Dorsolateral prefrontal cortex (tissue), 120 donors: ENCODE measurements at regions of chr12 and their contacts with region 1.

Region 1: DNA sequence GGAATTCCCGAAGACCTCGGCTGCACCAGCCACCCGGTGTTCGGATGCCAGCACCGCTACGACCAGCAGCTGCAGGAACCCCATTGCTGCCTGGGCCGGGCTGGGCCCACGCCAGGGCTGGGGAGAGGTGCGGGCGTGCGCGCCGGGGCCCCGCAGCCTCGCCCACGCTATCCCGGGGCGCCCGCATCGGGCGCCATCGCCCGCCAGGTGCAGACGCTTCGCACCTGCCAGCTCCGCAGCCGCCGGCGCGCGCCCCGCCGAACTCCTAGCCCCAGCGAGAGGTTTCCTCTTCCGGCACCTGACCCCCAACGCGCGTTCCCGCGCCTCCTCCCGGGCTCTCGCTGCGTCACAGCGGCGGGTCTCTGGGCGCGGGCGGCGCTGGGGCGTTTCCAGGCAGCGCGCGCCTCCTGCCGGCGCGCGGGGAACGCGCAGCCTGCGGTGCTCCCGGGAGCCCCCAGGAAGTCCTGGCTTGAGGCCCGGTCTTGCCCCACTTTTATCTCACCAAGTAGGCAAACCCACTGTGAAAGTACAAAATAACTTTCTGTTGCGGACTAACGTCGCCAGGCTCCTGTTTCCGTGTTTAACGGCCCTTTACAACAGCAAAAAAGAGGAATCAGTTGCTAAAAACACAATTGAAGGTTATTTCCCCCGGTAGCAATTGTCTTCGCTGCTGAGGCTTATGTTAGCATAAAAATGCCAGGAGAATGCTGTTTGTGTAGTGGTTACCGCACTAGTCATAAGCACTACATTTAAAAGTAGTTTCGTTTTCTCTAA is at the start of gene TM7SF3:
- DNase-seq: peak; percentile 76 to 94 (median 88)
- H3K4me3 ChIP-seq: peak within 1 kb of the TSS; percentile 51 to 97 (median 85)
- H3K27ac ChIP-seq: peak within 1 kb of the TSS; percentile 66 to 98 (median 90)
- H3K27me3 ChIP-seq: no peaks in the 10 kb centered on the region
- CTCF ChIP-seq: peak; percentile 78 to 100 (median 98)
- total RNA-seq, gene TM7SF3: 52.9 to 129 (median 76.3) TPM

Region 2: GRCh38 chr12:26566675-26567074 is 447.6 kb before region 1 on chr12:
- intact Hi-C with region 1: no loop called
- DNase-seq: no peak
- H3K4me3 ChIP-seq: no peak overlapping the region
- H3K27ac ChIP-seq: peak overlapping the region in 17 of 59 donors; percentile 1 to 51 (median 22)
- H3K27me3 ChIP-seq: no peaks in the 10 kb centered on the region
- CTCF ChIP-seq: no peak

Region 3: DNA sequence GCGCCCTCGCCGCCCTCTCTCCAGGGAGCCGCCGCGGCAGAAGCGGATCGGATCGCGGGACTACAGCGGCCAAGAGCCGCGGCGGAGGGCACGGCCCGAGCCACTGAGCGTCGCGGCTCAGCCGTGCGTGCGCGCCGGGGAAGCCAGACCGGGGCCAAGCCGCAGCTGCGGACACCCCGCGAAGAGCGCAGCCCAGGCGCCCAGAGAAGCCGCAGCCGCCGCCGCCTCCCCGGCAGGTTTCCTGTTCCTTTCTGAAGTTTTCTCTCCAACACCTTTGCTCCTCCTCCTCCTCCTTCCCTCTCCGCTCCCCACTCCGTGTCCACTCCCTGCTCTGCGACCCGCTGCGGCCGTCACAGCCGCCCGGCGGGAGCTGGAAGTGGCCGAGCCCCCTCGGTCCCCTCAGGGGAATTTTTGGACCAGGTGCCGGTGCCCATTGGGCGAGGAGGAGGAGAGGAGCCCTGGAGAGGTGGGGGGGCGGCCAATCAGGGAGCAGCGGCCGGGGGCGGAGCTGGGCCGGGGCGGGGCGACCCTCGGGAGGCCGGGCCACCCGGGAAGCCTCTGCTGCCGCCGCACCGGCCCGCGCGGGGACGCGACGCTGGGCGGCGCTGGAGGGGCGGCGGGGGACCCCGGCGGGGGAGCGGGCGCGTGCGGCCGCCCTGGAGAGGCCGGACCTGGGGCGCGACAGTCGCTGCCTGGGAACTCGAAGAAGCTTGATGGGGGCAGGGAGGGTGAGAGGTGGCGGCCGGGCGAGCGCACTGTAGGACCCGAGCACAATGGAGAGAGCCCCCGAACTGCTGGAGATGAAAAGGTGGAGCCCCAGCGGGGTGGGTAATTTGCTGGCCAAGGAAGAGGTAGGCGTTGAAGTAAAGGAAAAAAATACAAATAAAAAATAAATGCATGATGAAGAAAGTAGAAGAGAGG is 181.2 kb before region 1 on chr12 and contains the start of gene ITPR2:
- intact Hi-C with region 1: loop called in 1 of 2 experiments (anchors 5 kb)
- DNase-seq: peak; percentile 73 to 94 (median 86)
- H3K4me3 ChIP-seq: peak within 1 kb of the TSS; percentile 69 to 96 (median 86)
- H3K27ac ChIP-seq: peak within 1 kb of the TSS in 58 of 59 donors; percentile 42 to 99 (median 89)
- H3K27me3 ChIP-seq: no peaks in the 10 kb centered on the region
- CTCF ChIP-seq: peak in 31 of 56 donors; percentile 6 to 66 (median 32)
- total RNA-seq, gene ITPR2: 35.5 to 122 (median 61.5) TPM

Region 4: GRCh38 chr12:26884765-26885576 is 129.3 kb before region 1 on chr12:
- intact Hi-C with region 1: loop called in 1 of 2 experiments (anchors 10 kb)
- DNase-seq: peak; percentile 37 to 89 (median 82)
- H3K4me3 ChIP-seq: peak overlapping the region in 32 of 59 donors; percentile 1 to 49 (median 32)
- H3K27ac ChIP-seq: no peak overlapping the region
- H3K27me3 ChIP-seq: no peaks in the 10 kb centered on the region
- CTCF ChIP-seq: peak; percentile 78 to 99 (median 94)

Region 5: DNA sequence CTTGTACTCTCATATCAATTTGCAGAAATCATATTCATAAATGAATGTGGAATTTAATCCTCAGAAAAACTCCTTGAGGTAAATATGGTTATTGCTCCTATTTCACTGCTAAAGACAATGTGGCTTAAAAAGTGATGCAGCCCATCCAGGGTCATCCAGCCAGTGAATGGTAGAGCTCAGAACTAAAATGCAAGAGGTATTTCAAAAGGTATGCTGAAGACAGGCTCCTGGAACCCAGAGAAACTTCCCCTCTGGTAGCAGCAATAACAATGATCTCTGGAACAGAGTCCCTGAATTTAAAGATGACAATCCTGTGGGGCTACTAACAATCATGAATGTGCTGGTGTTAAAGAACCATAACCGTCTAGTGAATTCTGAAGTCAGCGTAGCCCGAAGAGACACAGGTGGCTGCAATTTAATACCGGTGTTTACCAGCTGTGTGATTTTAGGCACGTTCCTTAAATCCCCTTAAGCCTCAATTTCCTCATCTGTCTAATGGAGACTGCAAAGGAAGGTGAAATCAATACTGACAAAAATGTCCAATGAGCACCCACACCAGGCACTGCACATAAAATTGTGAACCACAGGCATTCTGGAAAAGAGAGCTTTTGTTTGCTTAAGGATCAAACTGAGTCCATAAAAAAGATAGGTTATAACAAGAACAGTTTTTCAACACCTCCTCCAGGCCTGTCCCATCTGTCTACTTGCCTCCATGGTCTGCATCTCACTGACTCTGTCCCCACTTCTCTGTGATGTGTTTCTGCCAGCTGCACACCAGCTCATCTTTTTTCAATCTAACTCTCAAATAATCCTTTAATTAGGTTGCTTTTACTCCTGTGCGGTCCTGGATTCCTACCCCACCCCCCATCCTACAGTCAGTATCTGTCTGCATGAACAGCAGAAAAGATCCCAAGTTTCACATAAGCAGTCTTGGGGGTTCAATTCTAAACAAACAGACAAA is 10.6 kb before region 1 on chr12:
- intact Hi-C with region 1: loop called in 1 of 2 experiments (anchors 1 kb)
- DNase-seq: peak in 2 of 10 donors; percentile 42 to 48
- H3K4me3 ChIP-seq: no peak overlapping the region
- H3K27ac ChIP-seq: peak overlapping the region in 25 of 59 donors; percentile 4 to 68 (median 22)
- H3K27me3 ChIP-seq: no peaks in the 10 kb centered on the region
- CTCF ChIP-seq: no peak

Region 6: DNA sequence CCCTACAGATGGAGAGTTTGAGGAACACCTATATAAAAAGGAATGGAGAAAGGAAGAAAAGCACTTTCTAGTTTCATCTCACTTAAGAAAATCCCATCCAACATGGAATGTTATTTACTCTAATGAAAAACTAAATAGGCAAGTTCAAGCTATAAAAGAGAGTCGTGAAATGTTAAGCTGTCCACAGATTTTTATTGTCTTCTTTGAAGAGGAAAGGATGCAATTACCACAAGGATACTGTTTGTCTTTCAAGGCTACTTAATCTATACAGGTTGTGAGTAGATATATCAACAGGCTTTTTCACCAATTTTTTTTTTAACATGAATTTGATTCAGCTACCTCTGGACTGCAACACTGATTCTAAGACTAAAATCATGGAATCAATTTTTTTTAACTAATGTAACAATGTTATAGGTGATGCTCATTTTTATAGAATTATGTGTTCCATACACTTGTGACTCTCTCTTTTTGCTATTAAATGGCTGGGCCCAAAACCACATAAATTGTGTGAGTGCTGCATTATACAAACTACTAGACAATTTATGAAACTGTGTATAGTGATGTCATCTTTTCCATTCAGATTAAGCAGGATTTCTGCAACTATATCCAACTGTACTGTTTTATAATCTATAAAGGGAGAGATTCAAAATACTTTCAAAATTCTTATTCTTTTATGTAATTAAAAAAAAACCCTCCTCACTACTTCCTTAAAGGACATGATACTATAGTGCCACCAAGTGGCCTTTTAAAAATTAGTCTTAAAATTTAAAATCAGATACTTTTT is 291.6 kb after region 1 on chr12:
- intact Hi-C with region 1: loop called in 1 of 2 experiments (anchors 5 kb)
- DNase-seq: no peak
- H3K4me3 ChIP-seq: no peak overlapping the region
- H3K27ac ChIP-seq: peak overlapping the region in 3 of 59 donors; percentile 3 to 14 (median 12)
- H3K27me3 ChIP-seq: no peaks in the 10 kb centered on the region
- CTCF ChIP-seq: peak; percentile 43 to 89 (median 66)